Activated CD4-positive, alpha-beta T cell treated with anti-CD3 and anti-CD28 coated beads, Interleukin-2, amount 10 ng/mL, durations not matched to agents 24 days and 14 days (primary cell): ENCODE measurements at regions of chr6 and their contacts with region 1.

Region 1: GRCh38 chr6:135030056-135030473 is 24.6 kb downstream of the HBS1L start:
- DNase-seq: peak; percentile 76
- H3K4me3 Mint-ChIP-seq: peak overlapping the region; percentile 52
- H3K27ac Mint-ChIP-seq: peak overlapping the region; percentile 80
- H3K4me1 Mint-ChIP-seq: peaks cover 46% of the 10 kb centered on the region
- H3K27me3 Mint-ChIP-seq: no peaks in the 10 kb centered on the region

Region 2: DNA sequence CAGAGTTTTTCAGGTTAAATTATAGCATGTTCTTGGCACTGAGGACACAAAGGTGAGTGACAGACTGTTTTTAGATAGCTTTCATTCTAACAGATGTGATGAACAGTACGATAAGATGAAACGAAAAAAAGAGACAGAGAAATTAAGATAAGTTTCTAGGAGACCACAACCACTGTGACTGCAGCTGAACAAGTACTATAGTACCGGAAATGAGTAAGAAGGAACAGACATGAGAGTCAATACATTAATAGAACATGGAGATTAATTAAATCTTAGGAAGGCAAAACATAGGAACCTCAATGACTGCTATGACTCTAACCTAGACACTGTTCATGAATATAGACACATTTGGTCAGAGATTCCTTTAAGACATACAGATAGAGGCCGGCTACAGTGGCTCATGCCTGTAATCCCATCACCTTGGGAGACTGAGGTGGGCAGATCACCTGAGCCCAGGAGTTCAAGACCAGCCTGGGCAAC is 15.7 kb before region 1 on chr6:
- intact Hi-C with region 1: loop called (anchors 1 kb)
- DNase-seq: peak; percentile 70
- H3K4me3 Mint-ChIP-seq: peak overlapping the region; percentile 70
- H3K27ac Mint-ChIP-seq: peak overlapping the region; percentile 78
- H3K4me1 Mint-ChIP-seq: peaks cover 47% of the 10 kb centered on the region
- H3K27me3 Mint-ChIP-seq: no peaks in the 10 kb centered on the region

Region 3: DNA sequence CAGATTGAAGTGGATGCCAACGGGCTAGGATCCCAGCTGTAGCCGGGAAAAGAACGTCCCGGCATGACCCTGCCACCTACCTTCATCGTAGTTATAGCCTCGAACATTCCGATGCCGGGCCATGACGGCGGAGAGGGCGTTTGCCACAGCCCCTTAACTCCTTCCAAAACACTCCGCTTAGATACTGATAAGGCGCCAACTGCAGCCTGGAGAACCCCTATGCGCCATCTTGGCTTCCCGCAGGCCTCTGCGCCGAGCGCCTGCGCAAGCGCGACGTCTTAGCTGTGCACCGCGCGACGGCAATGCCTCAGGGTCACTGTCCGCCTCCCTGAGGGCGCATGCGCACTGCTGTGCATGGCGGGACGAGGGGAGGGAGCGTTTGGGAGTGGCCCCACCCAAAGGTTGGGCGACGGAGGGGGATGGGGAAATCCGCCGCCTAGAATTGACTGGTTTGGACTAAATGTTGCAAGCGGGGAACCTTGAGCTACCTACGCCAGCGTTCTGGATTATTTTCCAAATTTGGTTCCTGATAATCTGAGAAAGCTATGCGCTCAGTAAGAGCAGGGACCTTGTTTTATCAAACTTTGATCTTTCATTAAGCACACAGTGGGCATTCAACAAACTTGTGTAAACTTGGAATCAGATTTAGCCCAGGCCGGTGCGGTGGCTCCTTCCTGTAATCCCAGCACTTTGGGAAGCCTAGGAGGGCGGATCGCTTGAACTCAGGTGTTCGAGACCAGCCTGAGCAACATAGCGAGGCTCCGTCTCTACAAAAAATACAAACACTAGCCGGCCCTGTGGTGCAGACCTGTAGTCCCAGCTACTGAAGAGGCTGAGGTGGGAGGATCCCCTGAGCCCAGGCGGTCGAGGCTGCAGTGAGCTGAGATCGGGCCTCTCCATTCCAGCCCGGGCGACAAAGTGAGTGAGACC is 24.8 kb after region 1 on chr6 and contains the start of gene HBS1L:
- intact Hi-C with region 1: loop called (anchors 1 kb)
- DNase-seq: peak; percentile 99
- H3K4me3 Mint-ChIP-seq: peak within 1 kb of the TSS; percentile 92
- H3K27ac Mint-ChIP-seq: peak within 1 kb of the TSS; percentile 94
- H3K4me1 Mint-ChIP-seq: peaks cover 32% of the 10 kb centered on the region
- H3K27me3 Mint-ChIP-seq: no peaks in the 10 kb centered on the region
- total RNA-seq, gene HBS1L: 94.4 and 104 TPM in 2 replicates